Sciatic nerve (tissue), 2 donors: ENCODE measurements at regions of chr4 and their contacts with region 1.

Region 1: GRCh38 chr4:55214172-55214571 is 88.8 kb upstream of the KDR start:
- DNase-seq: no peak
- ATAC-seq: no peak

Region 2: GRCh38 chr4:55125087-55125721 is 89.0 kb before region 1 on chr4 and contains the start of gene KDR:
- intact Hi-C with region 1: no loop called
- DNase-seq: peak; percentile 68
- ATAC-seq: peak; percentile 92
- total RNA-seq, gene KDR: 60.7 TPM

Region 3: GRCh38 chr4:55242506-55242905 is 28.3 kb after region 1 on chr4:
- intact Hi-C with region 1: loop called (anchors 2 kb)
- DNase-seq: no peak
- ATAC-seq: no peak